Heart right ventricle (tissue), 16 donors: ENCODE measurements at regions of chr6 and their contacts with region 1.

Region 1: DNA sequence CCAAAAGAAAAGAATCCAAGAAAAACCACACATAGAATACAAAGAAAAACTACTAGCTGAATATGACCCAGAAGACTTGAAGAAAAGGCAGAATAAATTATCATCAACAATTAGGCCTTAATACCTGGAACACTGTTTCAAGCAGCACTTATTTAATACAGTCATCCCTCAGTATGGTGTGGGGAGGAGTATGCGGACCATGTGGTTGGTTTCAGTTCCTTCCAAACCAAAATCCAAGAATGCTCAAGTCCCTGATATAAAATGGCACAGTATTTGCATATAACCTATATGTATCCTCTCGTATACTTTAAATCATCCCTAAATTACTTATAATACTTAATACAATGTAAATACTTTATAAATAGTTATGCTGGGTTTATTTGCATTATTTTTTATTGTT is 16.1 kb downstream of the CDK19 start:
- DNase-seq: no peak
- ATAC-seq: no peak
- H3K4me3 ChIP-seq: no peak overlapping the region
- H3K27ac ChIP-seq: no peak overlapping the region
- H3K4me1 ChIP-seq: peaks cover 0 to 4% (median 0%) of the 10 kb centered on the region in 9 donors
- H3K27me3 ChIP-seq: no peaks in the 10 kb centered on the region
- CTCF ChIP-seq: no peak

Region 2: DNA sequence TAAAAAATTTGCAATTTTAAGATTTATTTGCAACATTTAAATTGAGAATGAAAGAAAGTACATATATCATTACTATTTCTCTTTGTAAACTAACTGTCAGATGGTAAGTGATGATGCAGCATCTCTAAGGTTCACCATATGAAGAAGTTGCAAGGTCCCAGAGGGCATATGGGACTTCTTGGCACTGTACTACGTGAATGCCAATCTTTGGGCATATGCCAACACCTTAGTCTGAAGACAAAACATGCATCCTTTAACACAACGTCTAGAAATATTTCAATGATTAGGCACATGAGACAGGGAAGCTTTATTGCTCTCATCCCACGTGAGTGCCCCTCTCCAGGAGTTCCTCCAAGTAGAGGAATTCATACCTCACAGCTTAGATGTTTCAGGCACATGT is 50.7 kb before region 1 on chr6:
- intact Hi-C with region 1: loop called in 1 of 10 experiments (anchors 2 kb)
- DNase-seq: no peak
- ATAC-seq: no peak
- H3K4me3 ChIP-seq: no peak overlapping the region
- H3K27ac ChIP-seq: no peak overlapping the region
- H3K4me1 ChIP-seq: peaks cover 0 to 31% (median 0%) of the 10 kb centered on the region in 9 donors
- H3K27me3 ChIP-seq: no peaks in the 10 kb centered on the region
- CTCF ChIP-seq: no peak